Activated CD4-positive, alpha-beta T cell treated with anti-CD3 and anti-CD28 coated beads, Interleukin-2, amount 10 ng/mL, durations not matched to agents 24 days and 14 days (primary cell): ENCODE measurements at regions of chr7 and their contacts with region 1.

Region 1: DNA sequence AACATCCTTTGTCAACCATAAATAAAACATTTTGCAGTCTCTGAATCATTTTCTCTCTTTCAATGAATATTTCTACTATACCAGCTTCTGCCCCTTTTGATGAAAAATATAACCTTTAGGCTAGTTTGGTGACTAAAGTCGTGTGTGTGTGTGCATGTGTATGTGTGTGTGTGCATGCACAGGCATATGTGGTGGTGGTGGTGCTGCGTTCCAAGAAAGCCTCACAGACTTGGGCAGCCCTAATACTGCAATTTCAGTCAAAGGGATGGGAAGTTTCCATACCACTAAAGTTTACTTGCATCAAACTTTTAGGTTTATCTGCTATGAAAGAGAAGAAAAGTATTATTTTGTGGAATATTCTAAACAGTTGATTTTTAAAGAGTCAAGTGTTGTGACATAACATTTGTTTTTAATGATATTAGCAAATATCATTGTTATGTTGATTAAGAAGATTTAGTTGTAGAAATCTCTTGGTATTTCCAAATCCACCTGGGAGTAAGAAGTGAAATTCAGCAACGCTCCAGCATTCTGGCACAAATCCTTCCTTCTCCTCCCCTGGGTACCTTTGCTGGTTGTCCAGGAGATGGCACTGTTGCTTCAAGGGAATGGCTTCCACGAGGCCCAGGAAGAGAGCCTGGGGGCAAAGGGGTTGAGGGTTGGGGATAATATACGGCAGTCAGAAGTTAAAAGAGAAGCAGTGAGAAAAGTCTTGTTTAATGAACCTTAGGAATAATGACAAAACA is 41.5 kb downstream of the ASB4 start:
- DNase-seq: peak; percentile 66
- H3K4me3 Mint-ChIP-seq: no peak overlapping the region
- H3K27ac Mint-ChIP-seq: no peak overlapping the region
- H3K4me1 Mint-ChIP-seq: no peaks in the 10 kb centered on the region
- H3K27me3 Mint-ChIP-seq: peaks cover 13% of the 10 kb centered on the region

Region 2: DNA sequence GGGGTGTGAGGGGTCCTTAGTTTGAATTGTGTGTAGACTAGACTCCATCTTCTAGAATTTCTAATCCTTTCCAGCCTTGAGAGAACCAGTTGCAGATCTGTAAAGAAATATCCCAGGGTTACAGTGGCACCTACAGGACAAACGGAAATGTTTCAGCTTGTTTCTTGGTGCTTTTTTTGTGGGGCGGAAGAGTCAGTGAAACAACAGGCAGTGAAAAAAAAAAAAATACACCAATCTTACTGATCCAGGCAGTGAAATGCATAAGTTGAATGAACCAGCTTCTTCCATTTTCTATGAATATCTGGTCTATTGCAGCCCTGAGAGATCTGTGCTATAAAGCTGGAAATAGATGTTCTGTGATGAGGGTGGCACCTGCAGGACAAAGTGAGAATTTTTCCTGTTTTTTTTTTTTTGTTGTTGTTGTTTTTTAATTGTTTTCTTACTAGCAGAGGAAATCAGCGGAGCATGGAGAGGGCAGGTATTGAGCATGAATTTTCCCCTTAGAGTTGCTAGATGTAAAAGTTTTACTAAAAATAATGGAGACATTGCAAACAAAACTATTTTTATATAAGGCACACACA is 163.3 kb after region 1 on chr7:
- intact Hi-C with region 1: loop called (anchors 1 kb)
- DNase-seq: peak; percentile 64
- H3K4me3 Mint-ChIP-seq: no peak overlapping the region
- H3K27ac Mint-ChIP-seq: no peak overlapping the region
- H3K4me1 Mint-ChIP-seq: peaks cover 4% of the 10 kb centered on the region
- H3K27me3 Mint-ChIP-seq: no peaks in the 10 kb centered on the region